Activated naive CD4-positive, alpha-beta T cell treated with anti-CD3 and anti-CD28 coated beads for 36 hours (primary cell): ENCODE measurements at regions of chr12 and their contacts with region 1.

Region 1: GRCh38 chr12:121781998-121782979 is 11.2 kb downstream of the RHOF start:
- DNase-seq: peak; percentile 91
- H3K4me3 Mint-ChIP-seq: peak overlapping the region; percentile 69
- H3K27ac Mint-ChIP-seq: peak overlapping the region; percentile 98
- H3K4me1 Mint-ChIP-seq: peaks cover 76% of the 10 kb centered on the region
- H3K27me3 Mint-ChIP-seq: no peaks in the 10 kb centered on the region

Region 2: DNA sequence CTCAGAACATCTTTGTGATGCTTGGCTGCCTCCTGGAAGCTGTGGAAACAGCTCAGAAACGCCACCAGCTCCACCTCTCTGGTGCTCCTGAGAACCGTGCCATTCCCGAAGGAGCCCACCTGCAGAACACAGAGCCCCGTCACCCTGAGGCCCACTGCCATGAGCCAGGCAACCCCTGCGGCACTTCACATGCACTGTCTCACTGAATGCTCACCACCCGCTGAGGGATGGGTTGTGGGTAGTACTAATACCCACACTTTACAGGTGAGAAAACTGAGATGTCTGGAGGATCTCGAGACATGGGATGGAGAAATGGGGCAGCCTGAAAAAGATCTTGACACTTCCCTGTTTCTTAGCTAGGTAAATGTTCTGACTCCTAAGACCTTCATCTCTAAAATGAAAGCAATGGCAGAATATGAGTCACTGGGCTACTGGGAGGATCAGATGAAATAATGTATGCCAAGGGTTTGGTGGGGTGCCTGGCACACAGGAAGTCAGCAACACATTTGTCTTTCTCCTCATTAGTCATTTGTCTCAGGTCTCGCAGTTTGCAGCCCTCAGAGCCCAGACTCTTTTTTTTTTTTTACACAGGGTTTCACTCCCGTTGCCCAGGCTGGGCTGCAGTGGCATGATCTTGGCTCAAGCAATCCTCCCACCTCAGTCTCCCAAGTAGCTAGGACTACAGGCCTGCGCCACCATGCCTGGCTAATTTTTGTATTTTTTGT is 748.5 kb before region 1 on chr12:
- CTCF ChIA-PET with region 1: no interaction called
- intact Hi-C with region 1: loop called (anchors 5 kb)
- DNase-seq: peak; percentile 82
- H3K4me3 Mint-ChIP-seq: no peak overlapping the region
- H3K27ac Mint-ChIP-seq: peak overlapping the region; percentile 58
- H3K4me1 Mint-ChIP-seq: peaks cover 52% of the 10 kb centered on the region
- H3K27me3 Mint-ChIP-seq: no peaks in the 10 kb centered on the region

Region 3: GRCh38 chr12:121399391-121400331 is 382.6 kb before region 1 on chr12 and contains the start of gene RNF34:
- CTCF ChIA-PET with region 1: no interaction called
- intact Hi-C with region 1: no loop called
- DNase-seq: peak; percentile 99
- H3K4me3 Mint-ChIP-seq: peak within 1 kb of the TSS; percentile 87
- H3K27ac Mint-ChIP-seq: peak within 1 kb of the TSS; percentile 93
- H3K4me1 Mint-ChIP-seq: peaks cover 32% of the 10 kb centered on the region
- H3K27me3 Mint-ChIP-seq: no peaks in the 10 kb centered on the region
- total RNA-seq, gene RNF34: 54.1 to 57.0 TPM

Region 4: GRCh38 chr12:121579981-121580868 is 202.1 kb before region 1 on chr12:
- CTCF ChIA-PET with region 1: no interaction called
- intact Hi-C with region 1: loop called (anchors 2 kb)
- DNase-seq: peak; percentile 85
- H3K4me3 Mint-ChIP-seq: peak overlapping the region; percentile 90
- H3K27ac Mint-ChIP-seq: peak overlapping the region; percentile 92
- H3K4me1 Mint-ChIP-seq: peaks cover 16% of the 10 kb centered on the region
- H3K27me3 Mint-ChIP-seq: no peaks in the 10 kb centered on the region

Region 5: DNA sequence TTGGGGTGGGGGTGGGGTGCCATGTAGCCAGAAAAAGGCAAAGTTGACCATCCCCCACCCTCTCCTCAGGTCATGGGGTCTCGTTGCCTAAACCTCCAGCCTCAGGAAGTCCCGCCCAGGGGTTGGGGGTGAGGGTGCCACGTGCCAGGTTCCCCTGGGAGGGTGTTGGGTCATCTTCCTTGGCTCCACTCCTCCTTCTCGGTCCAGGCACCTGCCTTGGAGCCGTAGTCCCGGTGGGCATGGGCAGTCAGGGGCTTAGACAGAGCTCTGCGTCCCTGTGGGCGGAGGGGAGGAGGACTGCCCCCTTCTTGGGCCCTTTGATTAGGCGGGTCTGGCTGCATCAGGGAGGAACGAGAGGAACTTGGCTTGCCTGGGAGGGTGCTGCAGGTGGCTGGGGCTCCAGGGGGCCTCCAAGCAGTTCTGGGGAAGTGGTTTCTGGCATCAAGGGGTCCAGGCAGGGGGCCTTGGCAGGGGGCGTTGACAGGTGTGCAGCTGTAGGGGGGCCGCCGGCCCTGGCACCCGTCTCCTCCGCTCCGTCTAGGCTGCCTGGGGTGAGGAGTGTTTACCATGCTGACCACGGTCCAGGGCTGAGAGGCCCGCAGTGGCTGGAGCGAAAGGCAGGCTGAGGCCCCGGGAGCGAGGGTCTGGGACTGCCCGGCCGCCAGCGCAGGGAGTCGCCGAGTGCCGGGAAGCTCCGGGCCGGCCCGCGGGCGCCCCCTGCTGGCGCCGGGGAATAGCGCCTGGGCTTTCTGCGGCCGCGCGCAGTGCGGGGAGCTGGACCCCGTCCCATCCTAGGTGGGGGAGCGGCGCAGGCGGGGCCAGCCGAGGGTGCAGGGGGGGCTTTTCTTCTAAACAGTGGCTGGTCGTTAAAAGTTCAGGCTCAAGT is 29.4 kb after region 1 on chr12:
- CTCF ChIA-PET with region 1: interaction called, 16 read pairs
- intact Hi-C with region 1: no loop called
- DNase-seq: peak; percentile 67
- H3K4me3 Mint-ChIP-seq: peak overlapping the region; percentile 78
- H3K27ac Mint-ChIP-seq: peak overlapping the region; percentile 86
- H3K4me1 Mint-ChIP-seq: peaks cover 52% of the 10 kb centered on the region
- H3K27me3 Mint-ChIP-seq: no peaks in the 10 kb centered on the region